PC-9 (cell line): ENCODE measurements at regions of chr2 and their contacts with region 1.

Region 1: GRCh38 chr2:240913810-240914644 is 7.9 kb downstream of the CROCC2 start:
- DNase-seq: peak in 1 of 2 experiments; percentile 65
- H3K4me3 ChIP-seq: no peak overlapping the region
- H3K27ac ChIP-seq: no peak overlapping the region
- H3K4me1 ChIP-seq: peaks cover 17% of the 10 kb centered on the region
- H3K27me3 ChIP-seq: no peaks in the 10 kb centered on the region
- CTCF ChIP-seq: peak; percentile 99

Region 2: DNA sequence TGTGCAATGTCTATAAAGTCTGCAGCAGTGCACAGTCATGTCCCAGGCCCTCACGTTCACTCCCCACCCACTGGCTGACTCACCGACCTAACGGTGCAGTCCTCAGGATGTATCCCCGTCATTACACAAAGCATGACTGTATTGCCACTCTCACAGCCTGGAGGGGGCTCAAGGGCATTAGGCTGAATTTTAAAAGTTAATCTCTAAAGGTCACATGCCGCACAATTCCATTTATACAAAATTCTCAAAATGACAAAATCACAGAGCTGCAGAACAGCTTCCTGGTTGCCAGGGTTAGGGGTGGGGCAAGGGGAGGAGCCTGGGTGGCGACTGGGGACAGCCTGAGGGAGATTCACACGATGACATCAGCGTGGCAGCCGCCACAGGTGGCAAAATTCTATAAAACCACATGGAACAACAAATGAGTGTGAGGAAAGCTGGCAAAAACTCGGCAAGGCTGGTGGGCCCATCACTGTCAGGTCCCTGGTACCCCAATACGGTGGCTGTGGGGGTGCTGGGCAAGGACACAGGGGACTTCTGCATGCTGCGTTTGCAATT is 986.5 kb before region 1 on chr2:
- CTCF ChIA-PET with region 1: no interaction called
- POLR2A ChIA-PET with region 1: no interaction called
- intact Hi-C with region 1: no loop called
- DNase-seq: peak; percentile 62 to 68
- H3K4me3 ChIP-seq: no peak overlapping the region
- H3K27ac ChIP-seq: no peak overlapping the region
- H3K4me1 ChIP-seq: 0 out of 2 replicates have a peak, but pooled peaks cover 3% of the 10 kb centered on the region
- H3K27me3 ChIP-seq: peaks cover 48% of the 10 kb centered on the region
- CTCF ChIP-seq: no peak

Region 3: DNA sequence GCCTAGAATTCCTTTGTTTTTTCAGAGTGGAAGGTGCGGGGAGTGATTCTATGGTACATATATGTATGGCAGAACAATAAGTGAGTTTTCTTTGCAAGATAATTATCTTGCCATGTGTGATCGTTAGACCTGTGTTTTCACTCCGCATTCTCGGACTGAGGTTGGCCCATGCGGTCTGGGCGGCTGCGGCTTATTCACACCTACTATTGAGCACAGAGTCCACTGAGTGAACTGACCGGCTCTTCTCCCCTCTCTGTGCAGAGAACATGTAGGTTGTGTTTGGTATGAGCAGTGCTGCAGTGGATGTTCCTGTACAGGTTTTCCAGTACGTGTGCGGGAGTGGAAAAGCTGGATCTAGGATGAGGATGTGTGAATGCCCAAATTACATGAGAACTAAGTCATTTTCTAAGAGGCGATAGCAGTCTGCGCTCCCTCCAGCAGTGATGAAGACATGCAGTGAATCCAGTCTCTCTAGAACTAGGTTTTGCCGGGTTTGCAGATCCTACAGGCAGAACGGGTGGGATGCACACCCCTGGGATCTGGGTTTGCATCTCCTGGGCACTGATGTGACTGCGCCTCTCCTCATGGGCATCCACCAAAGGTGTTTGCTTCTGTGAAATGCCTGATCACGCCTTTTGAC is 161.0 kb after region 1 on chr2:
- CTCF ChIA-PET with region 1: no interaction called
- POLR2A ChIA-PET with region 1: interaction called, 3 read pairs
- intact Hi-C with region 1: loop called (anchors 1 kb)
- DNase-seq: no peak
- H3K4me3 ChIP-seq: no peak overlapping the region
- H3K27ac ChIP-seq: no peak overlapping the region
- H3K4me1 ChIP-seq: no peaks in the 10 kb centered on the region
- H3K27me3 ChIP-seq: peaks cover 25% of the 10 kb centered on the region
- CTCF ChIP-seq: no peak

Region 4: GRCh38 chr2:241344925-241345651 is 431.1 kb after region 1 on chr2:
- CTCF ChIA-PET with region 1: no interaction called
- POLR2A ChIA-PET with region 1: no interaction called
- intact Hi-C with region 1: no loop called
- DNase-seq: no peak
- H3K4me3 ChIP-seq: no peak overlapping the region
- H3K27ac ChIP-seq: no peak overlapping the region
- H3K4me1 ChIP-seq: no peaks in the 10 kb centered on the region
- H3K27me3 ChIP-seq: no peaks in the 10 kb centered on the region
- CTCF ChIP-seq: no peak